B cell (primary cell): ENCODE measurements at regions of chr7 and their contacts with region 1.

Region 1: GRCh38 chr7:26864309-26865093 is at the start of gene SKAP2:
- DNase-seq: peak; percentile 97
- ATAC-seq: peak; percentile 85
- H3K4me3 ChIP-seq: peak within 1 kb of the TSS; percentile 73 to 95 (median 90)
- H3K4me3 Mint-ChIP-seq: peak within 1 kb of the TSS; percentile 100
- H3K27ac ChIP-seq: peak within 1 kb of the TSS; percentile 95
- H3K27ac Mint-ChIP-seq: peak within 1 kb of the TSS; percentile 98
- H3K4me1 ChIP-seq: peaks cover 0 to 23% of the 10 kb centered on the region in 2 donors
- H3K4me1 Mint-ChIP-seq: peaks cover 41% of the 10 kb centered on the region
- H3K27me3 ChIP-seq: no peaks in the 10 kb centered on the region
- H3K27me3 Mint-ChIP-seq: no peaks in the 10 kb centered on the region
- CTCF ChIP-seq: no peak
- total RNA-seq, gene SKAP2: 53.4 and 58.4 TPM in 2 replicates

Region 2: GRCh38 chr7:25951031-25951948 is 913.2 kb before region 1 on chr7:
- CTCF ChIA-PET with region 1: no interaction called
- POLR2A ChIA-PET with region 1: no interaction called
- intact Hi-C with region 1: loop called (anchors 10 kb)
- DNase-seq: peak; percentile 90
- ATAC-seq: peak; percentile 90
- H3K4me3 ChIP-seq: peak overlapping the region; percentile 15 to 69 (median 51)
- H3K4me3 Mint-ChIP-seq: peak overlapping the region; percentile 89
- H3K27ac ChIP-seq: no peak overlapping the region
- H3K27ac Mint-ChIP-seq: peak overlapping the region; percentile 78
- H3K4me1 ChIP-seq: peaks cover 32 to 33% of the 10 kb centered on the region in 2 donors
- H3K4me1 Mint-ChIP-seq: peaks cover 35% of the 10 kb centered on the region
- H3K27me3 ChIP-seq: peaks cover 0 to 38% (median 33%) of the 10 kb centered on the region in 4 experiments
- H3K27me3 Mint-ChIP-seq: peaks cover 30% of the 10 kb centered on the region
- CTCF ChIP-seq: no peak

Region 3: DNA sequence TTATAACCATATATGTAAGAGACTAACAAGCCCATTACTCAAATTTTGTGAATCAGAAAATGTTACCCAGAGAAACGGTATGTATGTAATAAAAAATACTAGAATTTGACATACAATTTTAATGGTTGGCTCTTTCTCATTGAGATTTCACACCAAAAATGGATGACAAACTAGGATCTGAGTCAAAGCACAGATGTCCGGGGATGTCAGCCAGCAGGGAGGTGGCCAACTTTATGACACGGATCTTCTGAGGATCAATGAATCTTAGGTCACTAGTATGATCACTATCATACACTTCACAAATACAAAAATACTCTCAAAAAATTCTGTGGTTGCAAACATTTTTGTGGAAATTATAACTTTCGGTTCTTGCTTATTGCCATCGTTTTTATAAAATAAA is 886.0 kb before region 1 on chr7:
- CTCF ChIA-PET with region 1: no interaction called
- POLR2A ChIA-PET with region 1: no interaction called
- intact Hi-C with region 1: no loop called
- DNase-seq: no peak
- ATAC-seq: no peak
- H3K4me3 ChIP-seq: no peak overlapping the region
- H3K4me3 Mint-ChIP-seq: no peak overlapping the region
- H3K27ac ChIP-seq: no peak overlapping the region
- H3K27ac Mint-ChIP-seq: no peak overlapping the region
- H3K4me1 ChIP-seq: no peaks in the 10 kb centered on the region
- H3K4me1 Mint-ChIP-seq: no peaks in the 10 kb centered on the region
- H3K27me3 ChIP-seq: peaks cover 0 to 20% (median 8%) of the 10 kb centered on the region in 4 experiments
- H3K27me3 Mint-ChIP-seq: peaks cover 7% of the 10 kb centered on the region
- CTCF ChIP-seq: no peak

Region 4: GRCh38 chr7:26376175-26376917 is 488.2 kb before region 1 on chr7:
- CTCF ChIA-PET with region 1: interaction called, 3 read pairs
- POLR2A ChIA-PET with region 1: no interaction called
- intact Hi-C with region 1: loop called (anchors 5 kb)
- DNase-seq: peak; percentile 80
- ATAC-seq: peak; percentile 54
- H3K4me3 ChIP-seq: peak overlapping the region; percentile 34 to 69 (median 58)
- H3K4me3 Mint-ChIP-seq: peak overlapping the region; percentile 87
- H3K27ac ChIP-seq: no peak overlapping the region
- H3K27ac Mint-ChIP-seq: no peak overlapping the region
- H3K4me1 ChIP-seq: peaks cover 8 to 9% of the 10 kb centered on the region in 2 donors
- H3K4me1 Mint-ChIP-seq: peaks cover 6% of the 10 kb centered on the region
- H3K27me3 ChIP-seq: peaks cover 0 to 16% (median 2%) of the 10 kb centered on the region in 4 experiments
- H3K27me3 Mint-ChIP-seq: no peaks in the 10 kb centered on the region
- CTCF ChIP-seq: no peak

Region 5: DNA sequence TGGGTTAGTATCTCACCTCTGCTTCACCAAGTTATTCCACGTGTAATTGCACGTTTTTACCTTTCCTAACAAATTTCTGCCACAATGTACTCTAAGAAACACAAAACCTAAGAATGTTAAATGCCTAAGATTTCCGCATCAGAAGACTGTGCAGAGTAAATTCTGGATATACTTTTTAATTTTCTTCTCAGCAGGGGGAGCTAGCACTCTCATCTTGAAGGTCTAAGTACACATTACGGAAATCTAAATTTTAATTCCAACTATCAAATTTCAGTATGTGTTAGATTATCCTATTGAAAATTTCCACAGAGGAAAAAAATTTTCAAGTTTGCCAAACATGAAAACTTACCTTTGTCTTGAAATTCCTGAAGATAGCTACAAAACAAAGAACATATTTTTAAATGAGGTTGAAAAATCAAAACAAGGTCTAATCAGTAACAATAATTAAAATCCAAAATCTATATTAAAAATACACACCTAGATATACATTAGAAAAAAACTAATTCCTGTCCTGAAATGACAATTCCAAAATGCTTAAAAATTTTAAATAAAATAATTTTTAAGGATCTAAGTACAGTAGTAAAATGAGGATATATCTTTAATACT is 10.6 kb before region 1 on chr7:
- CTCF ChIA-PET with region 1: interaction called, 8 read pairs
- POLR2A ChIA-PET with region 1: no interaction called
- intact Hi-C with region 1: loop called (anchors 1 kb)
- DNase-seq: peak; percentile 62
- ATAC-seq: no peak
- H3K4me3 ChIP-seq: no peak overlapping the region
- H3K4me3 Mint-ChIP-seq: no peak overlapping the region
- H3K27ac ChIP-seq: no peak overlapping the region
- H3K27ac Mint-ChIP-seq: no peak overlapping the region
- H3K4me1 ChIP-seq: peaks cover 21 to 23% of the 10 kb centered on the region in 2 donors
- H3K4me1 Mint-ChIP-seq: peaks cover 26% of the 10 kb centered on the region
- H3K27me3 ChIP-seq: no peaks in the 10 kb centered on the region
- H3K27me3 Mint-ChIP-seq: no peaks in the 10 kb centered on the region
- CTCF ChIP-seq: peak; percentile 74

Region 6: DNA sequence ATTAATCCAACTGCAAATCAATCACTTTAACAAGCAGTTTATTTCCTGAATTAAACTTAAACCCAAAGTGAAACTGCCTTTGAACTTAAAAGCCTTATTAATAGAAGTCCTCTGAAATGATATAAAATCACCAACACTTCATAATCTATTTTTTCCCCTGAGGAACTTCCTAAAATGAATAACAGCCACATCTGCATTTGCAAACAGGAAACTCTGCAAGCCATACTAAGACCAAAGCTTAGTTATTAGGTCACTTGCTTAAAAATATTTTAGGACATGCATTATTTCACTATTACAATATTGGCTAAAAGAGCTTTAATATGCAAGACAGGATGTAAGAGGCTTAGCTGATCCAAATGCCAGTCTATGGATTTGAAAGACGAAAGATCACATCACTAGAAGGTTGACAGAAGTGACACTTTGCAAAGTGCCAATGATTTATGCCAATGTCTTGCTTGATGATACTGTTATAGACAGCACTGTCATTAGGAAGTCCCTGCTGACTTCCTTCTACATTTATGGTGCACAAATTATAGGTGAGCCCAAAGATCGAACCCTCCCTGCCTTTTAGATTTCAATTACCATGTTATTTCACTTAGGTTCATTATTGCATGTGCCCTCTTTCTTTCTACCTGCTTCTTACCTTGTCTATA is 99.8 kb after region 1 on chr7:
- CTCF ChIA-PET with region 1: no interaction called
- POLR2A ChIA-PET with region 1: no interaction called
- intact Hi-C with region 1: no loop called
- DNase-seq: no peak
- ATAC-seq: no peak
- H3K4me3 ChIP-seq: no peak overlapping the region
- H3K4me3 Mint-ChIP-seq: no peak overlapping the region
- H3K27ac ChIP-seq: no peak overlapping the region
- H3K27ac Mint-ChIP-seq: no peak overlapping the region
- H3K4me1 ChIP-seq: peaks cover 0 to 6% of the 10 kb centered on the region in 2 donors
- H3K4me1 Mint-ChIP-seq: peaks cover 12% of the 10 kb centered on the region
- H3K27me3 ChIP-seq: no peaks in the 10 kb centered on the region
- H3K27me3 Mint-ChIP-seq: no peaks in the 10 kb centered on the region
- CTCF ChIP-seq: no peak

Region 7: GRCh38 chr7:27130540-27131389 is 266.3 kb after region 1 on chr7 and contains the start of gene HOXA4:
- CTCF ChIA-PET with region 1: no interaction called
- POLR2A ChIA-PET with region 1: no interaction called
- intact Hi-C with region 1: loop called (anchors 1 kb)
- DNase-seq: peak; percentile 63
- ATAC-seq: peak; percentile 93
- H3K4me3 ChIP-seq: peak within 1 kb of the TSS; percentile 48 to 72 (median 58)
- H3K4me3 Mint-ChIP-seq: peak within 1 kb of the TSS; percentile 80
- H3K27ac ChIP-seq: peak within 1 kb of the TSS; percentile 54 to 57
- H3K27ac Mint-ChIP-seq: peak within 1 kb of the TSS; percentile 67
- H3K4me1 ChIP-seq: no peaks in the 10 kb centered on the region
- H3K4me1 Mint-ChIP-seq: no peaks in the 10 kb centered on the region
- H3K27me3 ChIP-seq: peaks cover 0 to 22% (median 5%) of the 10 kb centered on the region in 4 experiments
- H3K27me3 Mint-ChIP-seq: peaks cover 65% of the 10 kb centered on the region
- CTCF ChIP-seq: no peak
- total RNA-seq, gene HOXA4: 0.24 TPM in 1 of 2 replicates, not detected in the other